Prostate gland (tissue), 2 donors: ENCODE measurements at regions of chr16 and their contacts with region 1.

Region 1: GRCh38 chr16:4315186-4316109 is at the start of gene GLIS2:
- DNase-seq: peak; percentile 51
- H3K4me3 ChIP-seq: peak within 1 kb of the TSS; percentile 53 to 63
- H3K27ac ChIP-seq: peak within 1 kb of the TSS; percentile 81 to 86
- H3K4me1 ChIP-seq: peaks cover 7% of the 10 kb centered on the region
- H3K27me3 ChIP-seq: no peaks in the 10 kb centered on the region
- CTCF ChIP-seq: peak in 2 of 4 experiments; percentile 8 to 16
- POLR2A ChIP-seq: peak; percentile 63
- total RNA-seq, gene GLIS2: 3.8 to 10.5 TPM

Region 2: GRCh38 chr16:3282730-3283524 is 1032.5 kb before region 1 on chr16 and contains the start of gene ZNF263:
- intact Hi-C with region 1: no loop called
- DNase-seq: peak; percentile 97
- H3K4me3 ChIP-seq: peak within 1 kb of the TSS; percentile 86 to 94
- H3K27ac ChIP-seq: peak within 1 kb of the TSS; percentile 98 to 99
- H3K4me1 ChIP-seq: peaks cover 9% of the 10 kb centered on the region
- H3K27me3 ChIP-seq: no peaks in the 10 kb centered on the region
- CTCF ChIP-seq: peak in 1 of 4 experiments; percentile 32
- POLR2A ChIP-seq: peak; percentile 49
- total RNA-seq, gene ZNF263: 51.2 to 88.8 TPM

Region 3: DNA sequence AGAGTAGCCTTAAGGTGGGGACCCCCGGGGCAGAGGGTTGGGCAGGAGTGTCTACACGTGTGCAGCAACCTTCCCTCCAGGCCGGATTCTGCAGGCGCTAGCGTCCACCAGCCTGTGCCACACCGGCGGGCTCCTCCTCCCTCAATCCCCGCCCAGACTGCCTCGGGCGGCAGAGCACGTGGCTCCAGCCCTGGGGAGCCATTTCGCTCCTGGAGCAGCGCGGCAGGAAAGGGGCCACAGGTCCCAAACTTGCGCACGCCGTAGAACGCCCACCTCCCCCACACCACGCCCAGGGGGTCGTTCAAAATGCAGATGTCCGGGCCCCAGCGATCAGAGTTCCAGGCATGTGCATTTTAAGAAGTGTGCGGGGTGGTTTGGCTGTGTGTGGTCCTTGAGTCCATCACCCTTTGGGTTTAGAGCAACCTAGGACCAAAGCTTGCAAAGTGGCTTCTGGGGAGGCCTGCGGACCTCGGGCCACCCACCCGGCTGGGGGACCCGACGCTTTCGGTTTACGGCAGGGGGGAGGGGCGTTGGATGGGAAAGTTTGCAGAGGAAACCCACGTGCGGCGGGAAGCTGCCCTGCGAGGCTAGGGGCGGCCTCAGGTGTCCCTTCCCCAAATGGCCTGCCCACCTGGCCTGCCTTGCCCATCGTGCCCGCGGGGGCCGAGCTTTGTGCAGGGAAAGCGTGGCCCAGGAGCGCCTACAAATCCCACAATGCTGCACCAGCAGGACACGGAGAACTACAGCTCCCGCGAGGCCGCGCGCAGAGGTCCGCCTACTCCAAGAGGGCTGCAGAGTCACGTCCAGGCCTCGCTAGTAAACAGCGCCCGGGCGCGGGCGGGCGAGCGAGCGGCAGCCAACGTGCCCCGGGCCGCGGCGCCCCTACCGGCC is 44.0 kb before region 1 on chr16:
- intact Hi-C with region 1: loop called (anchors 5 kb)
- DNase-seq: peak; percentile 93
- H3K4me3 ChIP-seq: peak overlapping the region; percentile 89 to 97
- H3K27ac ChIP-seq: peak overlapping the region; percentile 83 to 86
- H3K4me1 ChIP-seq: peaks cover 3% of the 10 kb centered on the region
- H3K27me3 ChIP-seq: no peaks in the 10 kb centered on the region
- CTCF ChIP-seq: peak in 1 of 4 experiments; percentile 16
- POLR2A ChIP-seq: peak; percentile 66

Region 4: GRCh38 chr16:4371357-4372000 is 56.0 kb after region 1 on chr16 and contains the start of gene VASN:
- intact Hi-C with region 1: no loop called
- DNase-seq: peak; percentile 85
- H3K4me3 ChIP-seq: peak within 1 kb of the TSS; percentile 72 to 82
- H3K27ac ChIP-seq: peak within 1 kb of the TSS; percentile 74 to 76
- H3K4me1 ChIP-seq: peaks cover 33% of the 10 kb centered on the region
- H3K27me3 ChIP-seq: no peaks in the 10 kb centered on the region
- CTCF ChIP-seq: no peak
- POLR2A ChIP-seq: peak; percentile 98
- total RNA-seq, gene VASN: 13.1 to 97.4 TPM